Breast epithelium (tissue), 4 donors: ENCODE measurements at regions of chr12 and their contacts with region 1.

Region 1: GRCh38 chr12:5648692-5649359 is 216.9 kb downstream of the NTF3 start:
- DNase-seq: no peak
- H3K4me3 ChIP-seq: no peak overlapping the region
- H3K27ac ChIP-seq: no peak overlapping the region
- H3K4me1 ChIP-seq: no peaks in the 10 kb centered on the region
- H3K27me3 ChIP-seq: peaks cover 0 to 9% of the 10 kb centered on the region in 2 donors
- CTCF ChIP-seq: peak in 2 of 3 donors; percentile 39 to 44
- POLR2A ChIP-seq: no peak

Region 2: DNA sequence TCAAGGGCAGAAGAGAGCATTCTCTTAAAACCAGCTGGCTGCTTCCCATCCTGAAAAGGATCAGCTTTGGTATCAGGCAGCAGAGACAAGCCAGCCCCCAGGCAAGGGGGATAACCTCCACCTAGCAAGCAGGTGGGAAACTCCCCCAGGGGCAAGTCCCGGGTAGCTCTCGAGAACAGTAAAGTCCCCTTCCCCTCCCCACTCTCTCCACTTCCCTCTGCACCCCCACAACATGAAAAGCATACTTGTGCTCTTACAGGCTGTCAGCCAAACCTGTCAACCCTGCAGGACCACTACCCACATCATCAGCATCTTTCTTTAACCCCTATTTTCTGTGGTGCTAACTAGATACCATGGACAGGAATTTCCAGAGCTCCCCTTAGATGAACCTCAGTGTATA is 37.1 kb after region 1 on chr12:
- intact Hi-C with region 1: loop called (anchors 2 kb)
- DNase-seq: no peak
- H3K4me3 ChIP-seq: no peak overlapping the region
- H3K27ac ChIP-seq: no peak overlapping the region
- H3K4me1 ChIP-seq: no peaks in the 10 kb centered on the region
- H3K27me3 ChIP-seq: peaks cover 0 to 8% of the 10 kb centered on the region in 2 donors
- CTCF ChIP-seq: no peak
- POLR2A ChIP-seq: no peak